Activated T-helper 2 cell treated with anti-CD3 and anti-CD28 coated beads, Interferon-gamma antibody, Interleukin-2, Interleukin-4, amounts not matched to agents 10 μg/mL and 5 μg/mL and 100 μg/mL, durations not matched to agents 14 hours and 24 hours and 36 hours (primary cell): ENCODE measurements at regions of chr12 and their contacts with region 1.

Region 1: DNA sequence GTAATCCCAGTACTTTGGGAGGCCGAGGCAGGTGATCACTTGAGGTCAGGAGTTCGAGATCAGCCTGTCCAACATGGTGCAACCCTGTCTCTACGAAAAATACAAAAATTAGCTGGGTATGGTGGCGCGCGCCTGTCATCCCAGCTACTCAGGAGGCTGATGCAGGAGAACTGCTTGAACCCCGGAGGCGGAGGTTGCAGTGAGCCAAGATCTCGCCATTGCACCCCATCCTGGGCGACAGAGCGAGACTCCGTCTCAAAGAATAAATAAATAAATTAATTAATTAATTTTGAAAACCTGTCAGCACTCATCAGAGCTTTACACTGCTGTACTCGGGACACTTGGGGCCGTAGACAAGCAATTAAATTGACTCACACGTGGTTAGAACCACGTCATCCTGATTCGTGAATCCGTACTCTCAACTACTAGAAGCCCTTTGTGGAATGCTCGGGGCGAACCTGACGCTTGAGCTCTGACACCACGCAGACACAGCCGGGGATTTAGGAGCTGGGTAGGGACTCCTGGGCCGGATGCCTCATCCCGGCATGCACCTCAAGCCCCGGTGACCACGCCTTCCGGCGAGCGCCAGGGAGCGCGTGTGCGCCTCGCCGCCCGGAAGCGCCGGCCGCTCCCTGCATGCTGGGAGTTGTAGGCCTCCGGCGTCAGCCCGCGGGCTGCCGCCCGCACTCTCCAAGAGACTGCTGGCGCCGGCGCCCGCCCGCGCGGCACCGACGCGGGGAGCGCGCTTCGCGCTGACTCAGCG is at the start of gene XPOT:
- DNase-seq: peak; percentile 92
- H3K4me3 Mint-ChIP-seq: peak within 1 kb of the TSS; percentile 93
- H3K27ac Mint-ChIP-seq: peak within 1 kb of the TSS; percentile 97
- H3K4me1 Mint-ChIP-seq: peaks cover 31% of the 10 kb centered on the region
- H3K27me3 Mint-ChIP-seq: no peaks in the 10 kb centered on the region
- total RNA-seq, gene XPOT: 119 and 120 TPM in 2 replicates

Region 2: GRCh38 chr12:63779498-63780481 is 624.1 kb before region 1 on chr12 and contains the start of gene RXYLT1:
- intact Hi-C with region 1: loop called (anchors 10 kb)
- DNase-seq: peak; percentile 79
- H3K4me3 Mint-ChIP-seq: peak within 1 kb of the TSS; percentile 94
- H3K27ac Mint-ChIP-seq: peak within 1 kb of the TSS; percentile 95
- H3K4me1 Mint-ChIP-seq: peaks cover 16% of the 10 kb centered on the region
- H3K27me3 Mint-ChIP-seq: peaks cover 8% of the 10 kb centered on the region
- total RNA-seq, gene RXYLT1: 22.0 and 23.3 TPM in 2 replicates

Region 3: GRCh38 chr12:63843721-63844390 is 560.0 kb before region 1 on chr12:
- intact Hi-C with region 1: loop called (anchors 5 kb)
- DNase-seq: peak; percentile 68
- H3K4me3 Mint-ChIP-seq: peak overlapping the region; percentile 66
- H3K27ac Mint-ChIP-seq: no peak overlapping the region
- H3K4me1 Mint-ChIP-seq: peaks cover 9% of the 10 kb centered on the region
- H3K27me3 Mint-ChIP-seq: peaks cover 47% of the 10 kb centered on the region

Region 4: GRCh38 chr12:64010069-64010699 is 393.7 kb before region 1 on chr12:
- intact Hi-C with region 1: no loop called
- DNase-seq: no peak
- H3K4me3 Mint-ChIP-seq: no peak overlapping the region
- H3K27ac Mint-ChIP-seq: no peak overlapping the region
- H3K4me1 Mint-ChIP-seq: no peaks in the 10 kb centered on the region
- H3K27me3 Mint-ChIP-seq: no peaks in the 10 kb centered on the region

Region 5: DNA sequence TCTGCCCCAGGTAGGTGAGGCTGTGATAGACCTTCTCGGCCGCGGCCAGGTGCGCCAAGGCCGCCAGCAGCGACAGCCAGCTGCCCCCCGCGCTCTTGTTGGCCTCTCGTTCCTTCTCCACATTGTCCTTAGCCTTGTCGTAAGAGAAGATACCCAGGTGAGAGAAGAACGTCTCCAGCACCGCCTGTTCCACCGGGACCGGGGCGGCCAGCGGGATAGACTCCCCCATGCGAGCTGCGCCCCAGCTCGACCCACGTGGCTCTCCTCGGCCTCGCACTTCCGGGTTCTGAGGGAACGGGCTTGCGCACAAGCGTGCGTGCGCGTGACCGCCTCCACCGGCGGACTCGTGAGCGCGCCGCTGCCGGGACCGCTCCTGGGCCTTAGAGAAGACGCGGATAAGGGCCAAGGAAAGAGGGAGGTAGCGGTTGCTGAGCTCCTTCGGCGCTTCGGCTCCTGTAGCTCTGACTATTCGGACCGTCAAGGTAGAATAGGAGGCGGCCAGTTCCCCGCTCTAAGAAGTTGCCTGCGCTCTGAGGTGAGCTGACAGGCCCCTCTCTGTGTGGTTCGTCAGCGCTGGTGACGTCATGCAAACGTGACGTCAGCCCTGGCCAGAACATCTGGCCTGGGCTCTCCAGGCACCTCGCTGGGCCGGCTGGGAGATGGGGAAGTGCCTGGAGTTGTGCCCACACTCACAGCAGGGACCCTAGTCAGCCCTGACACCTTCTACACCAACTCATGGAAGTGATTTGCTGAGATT is 181.7 kb before region 1 on chr12 and contains the start of gene KICS2:
- intact Hi-C with region 1: loop called (anchors 5 kb)
- DNase-seq: peak; percentile 88
- H3K4me3 Mint-ChIP-seq: peak within 1 kb of the TSS; percentile 99
- H3K27ac Mint-ChIP-seq: peak within 1 kb of the TSS; percentile 100
- H3K4me1 Mint-ChIP-seq: peaks cover 39% of the 10 kb centered on the region
- H3K27me3 Mint-ChIP-seq: peaks cover 18% of the 10 kb centered on the region
- total RNA-seq, gene KICS2: 15.3 and 16.6 TPM in 2 replicates

Region 6: GRCh38 chr12:64286521-64286920 is 117.4 kb before region 1 on chr12:
- intact Hi-C with region 1: no loop called
- DNase-seq: no peak
- H3K4me3 Mint-ChIP-seq: no peak overlapping the region
- H3K27ac Mint-ChIP-seq: no peak overlapping the region
- H3K4me1 Mint-ChIP-seq: no peaks in the 10 kb centered on the region
- H3K27me3 Mint-ChIP-seq: peaks cover 16% of the 10 kb centered on the region

Region 7: GRCh38 chr12:64352181-64352580 is 51.7 kb before region 1 on chr12:
- intact Hi-C with region 1: no loop called
- DNase-seq: no peak
- H3K4me3 Mint-ChIP-seq: no peak overlapping the region
- H3K27ac Mint-ChIP-seq: no peak overlapping the region
- H3K4me1 Mint-ChIP-seq: no peaks in the 10 kb centered on the region
- H3K27me3 Mint-ChIP-seq: peaks cover 2% of the 10 kb centered on the region

Region 8: GRCh38 chr12:64385468-64385867 is 18.4 kb before region 1 on chr12:
- intact Hi-C with region 1: loop called (anchors 1 kb)
- DNase-seq: no peak
- H3K4me3 Mint-ChIP-seq: no peak overlapping the region
- H3K27ac Mint-ChIP-seq: peak overlapping the region; percentile 80
- H3K4me1 Mint-ChIP-seq: peaks cover 28% of the 10 kb centered on the region
- H3K27me3 Mint-ChIP-seq: peaks cover 3% of the 10 kb centered on the region

Region 9: GRCh38 chr12:64451687-64452558 is 48.0 kb after region 1 on chr12 and contains the start of gene TBK1:
- intact Hi-C with region 1: loop called (anchors 1 kb)
- DNase-seq: peak; percentile 66
- H3K4me3 Mint-ChIP-seq: peak within 1 kb of the TSS; percentile 94
- H3K27ac Mint-ChIP-seq: peak within 1 kb of the TSS; percentile 95
- H3K4me1 Mint-ChIP-seq: peaks cover 35% of the 10 kb centered on the region
- H3K27me3 Mint-ChIP-seq: no peaks in the 10 kb centered on the region
- total RNA-seq, gene TBK1: 34.1 and 35.3 TPM in 2 replicates